ENCODE measurements at regions of chr1 and their contacts with region 1.

Region 1: GRCh38 chr1:12448746-12449177 is 169.2 kb downstream of the DHRS3 start:
- DNase-seq: no peak
- H3K4me3 Mint-ChIP-seq: peak overlapping the region; percentile 80
- H3K27ac Mint-ChIP-seq: peak overlapping the region; percentile 94
- H3K4me1 Mint-ChIP-seq: peaks cover 61% of the 10 kb centered on the region
- H3K27me3 Mint-ChIP-seq: peaks cover 4% of the 10 kb centered on the region

Region 2: GRCh38 chr1:12296623-12297022 is 152.1 kb before region 1 on chr1:
- intact Hi-C with region 1: loop called (anchors 1 kb)
- DNase-seq: no peak
- H3K4me3 Mint-ChIP-seq: peak overlapping the region; percentile 33
- H3K27ac Mint-ChIP-seq: peak overlapping the region; percentile 69
- H3K4me1 Mint-ChIP-seq: peaks cover 26% of the 10 kb centered on the region
- H3K27me3 Mint-ChIP-seq: no peaks in the 10 kb centered on the region

Region 3: DNA sequence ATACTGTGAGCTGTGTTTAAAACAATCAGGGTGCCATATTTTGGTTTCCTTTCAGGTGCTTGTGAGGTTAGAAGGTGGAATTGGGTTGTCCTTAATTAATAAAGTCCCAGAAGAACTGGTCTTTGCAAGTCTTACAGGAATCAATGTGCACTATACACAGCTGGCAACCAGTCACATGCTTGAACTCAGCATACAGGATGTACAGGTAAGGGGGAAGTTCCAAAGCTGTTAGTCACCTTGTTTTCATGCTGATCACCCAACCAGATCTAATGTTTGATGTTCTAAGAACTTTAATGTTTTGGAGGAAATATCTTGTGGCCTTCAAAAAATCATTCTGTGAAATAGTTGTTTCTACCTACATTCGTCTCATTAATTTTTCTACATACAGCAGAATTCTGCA is 62.6 kb before region 1 on chr1:
- intact Hi-C with region 1: loop called (anchors 1 kb)
- DNase-seq: peak; percentile 68
- H3K4me3 Mint-ChIP-seq: peak overlapping the region; percentile 55
- H3K27ac Mint-ChIP-seq: peak overlapping the region; percentile 50
- H3K4me1 Mint-ChIP-seq: peaks cover 51% of the 10 kb centered on the region
- H3K27me3 Mint-ChIP-seq: no peaks in the 10 kb centered on the region

Region 4: GRCh38 chr1:12467570-12468286 is 19.0 kb after region 1 on chr1:
- intact Hi-C with region 1: loop called (anchors 1 kb)
- DNase-seq: no peak
- H3K4me3 Mint-ChIP-seq: peak overlapping the region; percentile 7
- H3K27ac Mint-ChIP-seq: peak overlapping the region; percentile 82
- H3K4me1 Mint-ChIP-seq: peaks cover 34% of the 10 kb centered on the region
- H3K27me3 Mint-ChIP-seq: no peaks in the 10 kb centered on the region

Region 5: GRCh38 chr1:12477936-12478611 is 29.3 kb after region 1 on chr1:
- intact Hi-C with region 1: loop called (anchors 1 kb)
- DNase-seq: peak; percentile 66
- H3K4me3 Mint-ChIP-seq: peak overlapping the region; percentile 46
- H3K27ac Mint-ChIP-seq: peak overlapping the region; percentile 88
- H3K4me1 Mint-ChIP-seq: peaks cover 80% of the 10 kb centered on the region
- H3K27me3 Mint-ChIP-seq: no peaks in the 10 kb centered on the region

Region 6: DNA sequence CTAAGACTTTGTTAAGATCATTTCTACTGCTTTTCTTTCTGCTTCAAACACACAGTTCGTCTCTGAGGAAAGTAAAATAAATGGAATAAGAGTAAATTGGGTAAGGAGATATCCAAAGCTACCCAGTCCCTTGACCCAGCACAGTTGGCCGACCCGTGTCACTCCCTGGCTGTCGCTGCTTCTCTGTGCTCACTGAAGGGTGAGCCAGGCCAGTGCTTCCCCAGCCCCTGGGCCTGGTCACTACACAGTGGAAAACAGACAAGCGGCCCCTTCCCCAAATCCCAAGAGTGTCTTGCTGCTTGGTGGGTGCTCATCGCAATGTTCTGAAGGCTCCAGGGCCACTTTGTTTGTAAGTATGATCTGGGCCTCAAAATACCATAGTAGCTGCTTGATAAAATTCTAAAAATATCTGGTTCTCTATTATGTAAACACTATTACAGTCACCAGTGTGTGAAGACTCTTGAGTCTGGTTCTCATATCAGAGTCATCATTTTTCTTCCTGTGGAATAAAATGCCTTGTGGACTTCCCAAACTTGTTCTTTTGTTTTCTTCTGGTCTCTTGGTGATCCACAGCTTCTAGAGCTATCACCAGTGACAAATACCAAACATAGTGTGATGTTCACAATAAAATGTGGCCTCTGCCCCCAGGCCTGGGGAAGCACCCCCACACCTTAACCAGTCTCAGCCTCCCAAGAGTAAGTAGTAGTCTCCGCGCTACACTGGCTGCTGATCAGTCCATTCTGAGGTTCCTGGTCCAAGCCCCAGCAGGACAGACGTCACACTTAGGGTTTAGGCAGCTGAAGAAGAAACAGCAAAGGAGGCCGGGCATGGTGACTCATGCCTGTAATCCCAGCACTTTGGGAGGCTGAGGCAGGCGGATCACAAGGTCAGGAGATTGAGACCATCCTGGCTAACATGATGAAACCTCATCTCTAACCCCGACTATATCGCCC is 63.0 kb after region 1 on chr1:
- intact Hi-C with region 1: loop called (anchors 1 kb)
- DNase-seq: peak; percentile 58
- H3K4me3 Mint-ChIP-seq: peak overlapping the region; percentile 82
- H3K27ac Mint-ChIP-seq: peak overlapping the region; percentile 99
- H3K4me1 Mint-ChIP-seq: peaks cover 44% of the 10 kb centered on the region
- H3K27me3 Mint-ChIP-seq: no peaks in the 10 kb centered on the region